T-cell (primary cell): ENCODE measurements at regions of chr4 and their contacts with region 1.

Region 1: GRCh38 chr4:24244663-24245490 is 339.5 kb downstream of the DHX15 start:
- DNase-seq: no peak
- ATAC-seq: no peak
- H3K4me3 ChIP-seq: no peak overlapping the region
- H3K4me3 Mint-ChIP-seq: no peak overlapping the region
- H3K27ac ChIP-seq: no peak overlapping the region
- H3K27ac Mint-ChIP-seq: no peak overlapping the region
- H3K4me1 ChIP-seq: no peaks in the 10 kb centered on the region
- H3K4me1 Mint-ChIP-seq: no peaks in the 10 kb centered on the region
- H3K27me3 ChIP-seq: no peaks in the 10 kb centered on the region
- H3K27me3 Mint-ChIP-seq: peaks cover 0 to 4% of the 10 kb centered on the region in 2 donors

Region 2: GRCh38 chr4:22957774-22958309 is 1287.0 kb before region 1 on chr4:
- CTCF ChIA-PET with region 1: no interaction called
- POLR2A ChIA-PET with region 1: interaction called in 1 of 2 experiments, 10 read pairs
- DNase-seq: no peak
- ATAC-seq: no peak
- H3K4me3 ChIP-seq: no peak overlapping the region
- H3K4me3 Mint-ChIP-seq: no peak overlapping the region
- H3K27ac ChIP-seq: no peak overlapping the region
- H3K27ac Mint-ChIP-seq: no peak overlapping the region
- H3K4me1 ChIP-seq: no peaks in the 10 kb centered on the region
- H3K4me1 Mint-ChIP-seq: no peaks in the 10 kb centered on the region
- H3K27me3 ChIP-seq: no peaks in the 10 kb centered on the region
- H3K27me3 Mint-ChIP-seq: no peaks in the 10 kb centered on the region

Region 3: DNA sequence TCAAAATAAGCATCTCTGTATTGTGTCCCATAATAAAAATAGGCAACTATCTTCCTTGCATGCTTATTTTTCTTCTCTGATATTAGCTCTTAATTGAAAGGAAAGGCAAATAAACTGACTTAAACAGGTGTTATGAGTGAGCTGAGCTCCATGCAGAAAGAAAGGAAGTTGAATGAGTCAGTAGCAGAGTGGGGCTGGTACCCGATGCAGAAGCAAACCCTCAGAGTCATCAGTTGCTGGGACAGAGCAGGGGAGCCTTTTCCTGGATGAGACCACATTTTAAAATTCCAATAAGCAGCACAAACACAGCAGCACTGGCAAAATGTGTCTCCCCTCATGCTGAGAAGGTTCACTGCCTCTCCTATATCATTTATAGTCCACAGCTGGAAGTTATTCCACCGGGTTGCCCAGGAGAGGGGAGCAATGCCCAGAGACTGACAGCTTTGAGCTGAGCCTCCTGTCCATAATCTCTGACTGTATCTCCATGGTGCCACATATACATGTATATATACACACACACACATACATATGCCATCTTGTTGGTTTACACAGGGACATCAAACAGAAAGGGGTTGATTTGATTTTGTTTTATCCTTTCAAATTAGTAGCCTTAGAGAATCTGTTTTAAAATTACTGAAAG is 80.7 kb before region 1 on chr4:
- CTCF ChIA-PET with region 1: no interaction called
- POLR2A ChIA-PET with region 1: no interaction called
- DNase-seq: no peak
- ATAC-seq: no peak
- H3K4me3 ChIP-seq: no peak overlapping the region
- H3K4me3 Mint-ChIP-seq: no peak overlapping the region
- H3K27ac ChIP-seq: no peak overlapping the region
- H3K27ac Mint-ChIP-seq: no peak overlapping the region
- H3K4me1 ChIP-seq: no peaks in the 10 kb centered on the region
- H3K4me1 Mint-ChIP-seq: no peaks in the 10 kb centered on the region
- H3K27me3 ChIP-seq: no peaks in the 10 kb centered on the region
- H3K27me3 Mint-ChIP-seq: no peaks in the 10 kb centered on the region

Region 4: DNA sequence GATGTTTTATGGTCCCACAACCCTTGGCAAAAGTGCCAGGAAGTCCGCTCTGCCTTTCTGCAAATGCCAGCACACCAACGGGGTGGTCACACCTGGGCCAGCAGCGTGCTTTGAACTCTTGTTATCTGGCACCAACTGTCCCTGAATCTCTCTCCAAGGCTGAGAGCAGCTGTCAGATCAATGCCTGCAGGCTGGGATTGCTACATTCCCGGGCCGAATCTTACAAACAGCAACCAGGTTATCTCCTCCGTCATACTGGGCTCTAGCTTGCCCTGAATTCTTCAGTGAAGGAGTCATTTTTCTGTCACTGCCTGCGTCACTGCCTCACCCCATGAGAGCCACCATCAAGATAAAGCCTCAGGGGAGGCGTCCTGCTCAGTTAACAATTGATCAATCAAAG is 25.7 kb before region 1 on chr4:
- CTCF ChIA-PET with region 1: no interaction called
- POLR2A ChIA-PET with region 1: no interaction called
- DNase-seq: no peak
- ATAC-seq: no peak
- H3K4me3 ChIP-seq: no peak overlapping the region
- H3K4me3 Mint-ChIP-seq: no peak overlapping the region
- H3K27ac ChIP-seq: no peak overlapping the region
- H3K27ac Mint-ChIP-seq: no peak overlapping the region
- H3K4me1 ChIP-seq: no peaks in the 10 kb centered on the region
- H3K4me1 Mint-ChIP-seq: no peaks in the 10 kb centered on the region
- H3K27me3 ChIP-seq: no peaks in the 10 kb centered on the region
- H3K27me3 Mint-ChIP-seq: no peaks in the 10 kb centered on the region